ENCODE measurements at regions of chr19 and their contacts with region 1.

Region 1: DNA sequence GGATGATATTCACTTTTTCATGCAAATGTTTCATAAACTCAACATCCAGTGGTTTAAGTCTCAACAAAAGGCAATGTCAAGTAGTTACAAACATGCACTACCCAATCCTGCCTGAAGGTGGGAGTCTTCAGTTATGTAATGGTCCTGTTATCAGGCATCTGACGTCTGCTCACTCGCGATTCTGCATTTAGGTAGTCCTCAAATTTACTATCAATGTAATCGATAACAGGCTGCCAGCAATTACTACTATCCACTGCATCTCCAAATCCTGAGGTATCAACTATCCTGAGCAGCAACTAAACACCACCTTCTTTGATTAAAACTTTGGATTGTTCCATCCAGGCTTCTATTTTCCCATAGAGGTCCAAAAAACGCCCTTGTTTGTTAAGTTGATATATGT is 51.2 kb downstream of the NLRP12 start:
- DNase-seq: peak in 1 of 2 experiments; percentile 78
- H3K4me3 ChIP-seq: peak overlapping the region in 1 of 4 experiments; percentile 10; a peak in 1 of 8 replicates
- H3K27ac ChIP-seq: no peak overlapping the region
- H3K4me1 ChIP-seq: peaks cover 0 to 16% (median 4%) of the 10 kb centered on the region in 4 experiments; a peak in 5 of 7 replicates
- H3K27me3 ChIP-seq: no peaks in the 10 kb centered on the region
- CTCF ChIP-seq: peak; percentile 6 to 80 (median 59)
- EP300 ChIP-seq: no peak
- POLR2A ChIP-seq: no peak
- RAD21 ChIP-seq: peak; percentile 73 to 79

Region 2: DNA sequence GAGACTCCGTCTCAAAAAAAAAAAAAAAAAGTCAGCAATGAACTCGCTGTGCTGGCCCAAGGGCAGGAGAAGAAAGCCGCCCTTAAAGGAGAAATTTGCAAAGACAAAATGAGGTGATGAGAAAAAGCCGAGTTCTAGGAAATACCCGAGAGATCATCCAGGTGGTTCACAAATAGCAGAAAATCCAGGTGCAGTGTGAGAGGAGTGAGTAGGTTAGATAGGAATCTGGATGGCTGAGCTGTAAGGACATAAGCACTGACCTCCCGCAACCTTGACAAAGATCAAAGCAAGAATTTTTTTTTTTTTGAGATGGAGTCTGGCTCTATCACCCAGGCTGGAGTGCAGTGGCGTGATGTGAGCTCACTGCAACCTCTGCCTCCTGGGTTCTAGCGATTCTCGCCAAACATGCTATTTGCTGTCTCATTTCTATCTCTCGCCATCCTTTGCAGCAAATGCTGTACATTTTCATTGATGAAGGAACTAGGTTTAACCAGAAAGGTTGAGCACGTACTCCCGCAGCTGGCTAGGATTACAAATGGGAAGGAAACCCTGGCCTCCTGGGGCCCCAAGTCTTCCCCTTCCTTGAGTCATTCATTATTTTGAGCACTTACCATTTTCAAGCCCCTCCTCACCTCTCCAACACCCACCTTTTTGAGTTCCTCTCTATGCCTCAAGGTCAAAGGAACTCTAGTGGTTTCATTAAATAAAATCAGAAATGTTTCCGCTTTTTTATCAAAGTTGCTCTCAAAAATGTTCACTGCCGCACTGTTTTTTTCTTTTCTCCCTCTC is 12.4 kb after region 1 on chr19:
- CTCF ChIA-PET with region 1: interaction called, 108 read pairs
- POLR2A ChIA-PET with region 1: interaction called, 31 read pairs
- DNase-seq: no peak
- H3K4me3 ChIP-seq: no peak overlapping the region
- H3K27ac ChIP-seq: no peak overlapping the region
- H3K4me1 ChIP-seq: peaks cover 0 to 12% (median 4%) of the 10 kb centered on the region in 4 experiments; a peak in 5 of 7 replicates
- H3K27me3 ChIP-seq: no peaks in the 10 kb centered on the region
- CTCF ChIP-seq: no peak
- EP300 ChIP-seq: no peak
- POLR2A ChIP-seq: no peak
- RAD21 ChIP-seq: no peak

Region 3: GRCh38 chr19:53792721-53793433 is 19.9 kb after region 1 on chr19:
- CTCF ChIA-PET with region 1: interaction called, 108 read pairs
- POLR2A ChIA-PET with region 1: interaction called, 31 read pairs
- DNase-seq: peak; percentile 88 to 94
- H3K4me3 ChIP-seq: no peak overlapping the region
- H3K27ac ChIP-seq: no peak overlapping the region
- H3K4me1 ChIP-seq: no peaks in the 10 kb centered on the region
- H3K27me3 ChIP-seq: no peaks in the 10 kb centered on the region
- CTCF ChIP-seq: peak; percentile 83 to 99 (median 99)
- EP300 ChIP-seq: no peak
- POLR2A ChIP-seq: no peak
- RAD21 ChIP-seq: peak; percentile 91